ENCODE measurements at regions of chr9 and their contacts with region 1.

Region 1: DNA sequence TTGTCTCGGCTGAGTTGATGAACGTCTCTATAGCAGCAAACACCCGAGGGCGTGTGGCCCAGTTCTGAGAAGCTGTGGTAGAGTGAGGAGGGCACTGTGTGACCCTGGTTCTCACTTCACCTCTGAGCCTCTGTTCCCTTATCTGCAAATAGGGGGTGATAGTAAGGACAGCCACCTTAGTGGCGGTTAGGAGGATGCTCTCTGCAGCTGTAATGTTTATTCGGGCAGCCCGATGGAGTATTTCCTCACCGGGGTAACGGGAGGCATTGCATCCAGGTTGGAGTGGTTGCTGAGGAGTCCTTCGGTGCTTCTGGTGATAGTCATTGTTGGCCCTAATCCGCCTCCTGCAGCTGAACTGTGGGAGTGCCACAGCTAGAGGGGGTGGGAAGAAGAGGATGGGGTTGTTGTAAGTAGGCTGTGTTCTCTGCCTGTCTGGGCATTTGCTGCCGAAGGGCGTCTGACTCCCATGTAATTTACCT is 13.9 kb downstream of the PRRC2B start:
- DNase-seq: peak in 3 of 5 donors; percentile 37 to 64 (median 58)
- H3K4me3 ChIP-seq: no peak overlapping the region
- H3K27ac ChIP-seq: peak overlapping the region in 1 of 2 donors; percentile 36
- H3K4me1 ChIP-seq: peaks cover 51% of the 10 kb centered on the region
- H3K27me3 ChIP-seq: no peaks in the 10 kb centered on the region
- CTCF ChIP-seq: peak in 1 of 3 donors; percentile 24
- EP300 ChIP-seq: no peak
- POLR2A ChIP-seq: no peak

Region 2: DNA sequence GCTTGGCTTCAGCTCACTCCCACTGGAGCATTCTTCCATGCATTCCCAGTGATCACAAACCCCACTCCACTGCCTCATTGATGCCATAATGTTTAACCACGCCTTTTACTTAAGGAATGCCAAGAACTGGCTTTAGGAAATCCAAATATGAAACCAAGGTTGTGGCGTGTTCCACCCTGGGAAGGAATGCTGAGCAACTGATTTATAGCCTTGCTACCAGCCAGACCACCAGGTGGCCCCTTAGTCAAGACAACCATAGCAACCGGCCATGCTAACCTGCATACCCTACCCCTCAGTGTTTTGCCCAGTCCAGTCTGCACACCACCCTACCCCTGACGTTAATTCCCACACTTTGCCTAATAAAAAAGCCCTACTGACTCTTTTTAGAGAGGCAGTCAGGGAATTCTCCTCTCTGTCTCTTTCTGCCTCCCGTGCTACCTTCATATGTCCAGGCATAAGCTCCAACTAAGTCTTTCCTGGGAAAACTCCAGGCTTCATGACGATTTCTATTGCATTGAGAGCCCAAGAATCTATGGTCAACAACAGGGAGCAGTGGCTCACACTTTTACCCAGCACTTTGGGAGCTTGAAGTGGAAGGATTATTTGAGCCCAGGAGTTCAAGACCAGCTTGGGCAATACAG is 40.9 kb before region 1 on chr9:
- intact Hi-C with region 1: loop called in 1 of 4 experiments (anchors 5 kb)
- DNase-seq: peak in 3 of 5 donors; percentile 19 to 51 (median 48)
- H3K4me3 ChIP-seq: no peak overlapping the region
- H3K27ac ChIP-seq: no peak overlapping the region
- H3K4me1 ChIP-seq: no peaks in the 10 kb centered on the region
- H3K27me3 ChIP-seq: no peaks in the 10 kb centered on the region
- CTCF ChIP-seq: peak in 1 of 3 donors; percentile 27
- EP300 ChIP-seq: no peak
- POLR2A ChIP-seq: no peak

Region 3: DNA sequence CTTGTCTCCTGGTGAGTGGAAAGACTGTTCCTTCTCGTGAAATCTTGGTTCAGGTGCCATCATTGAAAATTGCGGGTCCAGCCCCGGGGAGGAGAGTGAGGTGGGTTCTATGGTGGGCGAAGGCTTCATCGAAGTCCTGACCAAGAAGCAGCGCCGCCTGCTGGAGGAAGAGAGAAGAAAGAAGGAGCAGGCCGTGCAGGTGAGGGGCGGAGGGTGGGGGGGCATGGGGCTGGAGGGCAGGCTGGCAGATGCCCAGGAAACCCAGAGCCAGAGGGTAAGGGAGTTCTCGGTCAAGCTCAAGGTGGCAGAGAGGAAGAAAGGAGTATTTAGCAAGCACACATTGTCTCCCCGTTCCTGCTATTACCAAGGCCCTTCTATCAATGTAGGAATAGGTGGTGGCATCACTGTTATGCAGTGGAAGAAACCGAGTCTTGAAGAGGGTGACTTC is 70.7 kb after region 1 on chr9:
- intact Hi-C with region 1: loop called in 1 of 4 experiments (anchors 10 kb)
- DNase-seq: peak; percentile 40 to 69 (median 61)
- H3K4me3 ChIP-seq: no peak overlapping the region
- H3K27ac ChIP-seq: no peak overlapping the region
- H3K4me1 ChIP-seq: no peaks in the 10 kb centered on the region
- H3K27me3 ChIP-seq: no peaks in the 10 kb centered on the region
- CTCF ChIP-seq: peak; percentile 24 to 32 (median 24)
- EP300 ChIP-seq: no peak
- POLR2A ChIP-seq: no peak

Measured in ovary (tissue), 10 donors.